Keratinocyte (primary cell): ENCODE measurements at regions of chr2 and their contacts with region 1.

Region 1: GRCh38 chr2:38274286-38275276 is 102.5 kb downstream of the ATL2 start:
- DNase-seq: no peak
- H3K4me3 ChIP-seq: no peak overlapping the region
- H3K27ac ChIP-seq: no peak overlapping the region
- H3K4me1 ChIP-seq: no peaks in the 10 kb centered on the region
- H3K27me3 ChIP-seq: no peaks in the 10 kb centered on the region
- CTCF ChIP-seq: peak in 2 of 3 experiments; percentile 32 to 64

Region 2: DNA sequence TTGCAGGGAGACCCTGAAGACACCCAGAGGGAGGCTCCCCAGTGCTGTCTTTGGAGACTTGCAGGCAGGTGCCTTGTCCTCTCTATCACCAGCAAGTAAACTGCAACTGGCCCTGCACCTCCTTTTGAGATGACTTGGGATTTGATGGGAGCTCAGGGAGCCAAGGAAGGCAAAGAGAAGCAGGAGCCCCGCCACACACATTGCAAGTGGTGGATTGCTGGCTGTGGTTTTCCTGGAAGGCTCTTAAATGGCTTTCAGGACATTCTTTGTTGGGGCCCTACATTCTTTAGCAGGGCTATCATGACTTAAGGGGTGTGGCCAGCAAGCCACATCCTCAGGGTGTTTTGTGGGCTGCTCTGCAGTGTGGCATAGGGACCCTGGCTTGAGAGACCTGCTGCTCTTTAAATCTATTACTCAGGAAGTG is 563.3 kb before region 1 on chr2:
- dilution Hi-C with region 1: no loop called
- DNase-seq: peak; percentile 40
- H3K4me3 ChIP-seq: peak overlapping the region in 1 of 3 experiments; percentile 3
- H3K27ac ChIP-seq: no peak overlapping the region
- H3K4me1 ChIP-seq: peaks cover 15% of the 10 kb centered on the region
- H3K27me3 ChIP-seq: no peaks in the 10 kb centered on the region
- CTCF ChIP-seq: no peak

Region 3: GRCh38 chr2:37982147-37982582 is 292.4 kb before region 1 on chr2:
- dilution Hi-C with region 1: loop called (anchors 25 kb)
- DNase-seq: no peak
- H3K4me3 ChIP-seq: no peak overlapping the region
- H3K27ac ChIP-seq: no peak overlapping the region
- H3K4me1 ChIP-seq: no peaks in the 10 kb centered on the region
- H3K27me3 ChIP-seq: no peaks in the 10 kb centered on the region
- CTCF ChIP-seq: peak; percentile 55 to 76 (median 74)

Region 4: DNA sequence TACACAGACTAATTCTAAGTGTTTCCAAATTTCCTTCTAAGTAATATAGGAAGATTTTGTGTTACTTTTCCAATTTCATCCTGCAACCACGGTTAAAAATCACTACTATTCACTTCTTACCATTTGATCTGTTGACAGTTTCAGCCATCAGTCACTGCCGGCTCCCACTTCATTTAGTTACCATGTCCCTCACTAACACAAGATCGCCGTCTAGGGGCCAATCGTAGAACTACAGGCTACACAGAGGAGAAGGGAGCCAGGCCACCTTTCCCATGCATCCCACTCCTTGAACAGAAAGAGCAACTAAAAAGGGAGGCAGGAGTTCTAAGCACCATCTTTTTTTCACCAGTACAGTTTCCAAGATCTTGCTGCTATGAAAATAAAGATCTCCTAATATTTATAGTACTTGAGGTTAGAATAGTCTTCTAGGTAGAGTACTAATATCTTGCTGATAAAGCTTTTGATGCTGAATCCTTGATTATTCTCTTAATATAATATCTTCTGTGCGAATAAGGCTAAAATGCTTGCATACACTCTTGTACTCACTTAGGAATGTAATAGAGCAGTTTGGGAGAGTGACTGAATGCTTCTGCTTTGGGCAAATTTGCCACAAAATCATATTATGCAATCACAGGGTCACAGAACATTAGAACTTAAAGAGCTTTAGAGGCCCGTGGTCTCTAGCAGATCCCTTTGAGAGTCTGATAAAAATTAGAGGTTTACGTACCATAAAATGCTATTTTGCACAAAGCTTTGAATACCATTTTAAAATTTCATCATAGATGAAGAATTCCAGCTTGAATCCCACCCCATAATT is 159.2 kb before region 1 on chr2:
- dilution Hi-C with region 1: no loop called
- DNase-seq: no peak
- H3K4me3 ChIP-seq: no peak overlapping the region
- H3K27ac ChIP-seq: no peak overlapping the region
- H3K4me1 ChIP-seq: peaks cover 16% of the 10 kb centered on the region
- H3K27me3 ChIP-seq: no peaks in the 10 kb centered on the region
- CTCF ChIP-seq: peak; percentile 96 to 100 (median 97)